ENCODE measurements at regions of chr3 and their contacts with region 1.

Region 1: DNA sequence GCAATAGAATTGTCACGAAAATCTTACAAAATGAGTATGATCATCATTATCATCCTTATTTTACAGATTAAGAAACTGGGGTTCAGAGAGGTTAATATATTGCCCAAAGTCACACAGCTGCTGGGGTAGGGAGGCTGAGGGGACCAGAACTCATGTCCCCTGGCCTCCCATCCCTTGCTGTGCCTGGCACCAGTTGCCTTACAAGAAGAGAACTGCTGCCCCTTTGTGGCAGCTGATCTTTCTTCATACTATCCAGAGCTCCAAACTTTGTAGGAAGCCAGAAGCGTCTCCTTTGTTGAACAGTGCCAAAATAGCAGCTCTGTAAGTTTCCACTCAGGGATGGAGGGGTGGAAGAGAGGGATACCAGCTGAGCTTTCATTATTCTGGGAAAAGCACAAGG is 236.8 kb upstream of the TBC1D5 start:
- DNase-seq: peak; percentile 35
- ATAC-seq: peak; percentile 77
- H3K4me3 ChIP-seq: no peak overlapping the region
- H3K27ac ChIP-seq: no peak overlapping the region
- H3K4me1 ChIP-seq: peaks cover 7% of the 10 kb centered on the region; the same call in 1 of the 2 replicates
- H3K27me3 ChIP-seq: no peaks in the 10 kb centered on the region
- CTCF ChIP-seq: peak; percentile 46; the same call in 1 of the 2 replicates

Region 2: DNA sequence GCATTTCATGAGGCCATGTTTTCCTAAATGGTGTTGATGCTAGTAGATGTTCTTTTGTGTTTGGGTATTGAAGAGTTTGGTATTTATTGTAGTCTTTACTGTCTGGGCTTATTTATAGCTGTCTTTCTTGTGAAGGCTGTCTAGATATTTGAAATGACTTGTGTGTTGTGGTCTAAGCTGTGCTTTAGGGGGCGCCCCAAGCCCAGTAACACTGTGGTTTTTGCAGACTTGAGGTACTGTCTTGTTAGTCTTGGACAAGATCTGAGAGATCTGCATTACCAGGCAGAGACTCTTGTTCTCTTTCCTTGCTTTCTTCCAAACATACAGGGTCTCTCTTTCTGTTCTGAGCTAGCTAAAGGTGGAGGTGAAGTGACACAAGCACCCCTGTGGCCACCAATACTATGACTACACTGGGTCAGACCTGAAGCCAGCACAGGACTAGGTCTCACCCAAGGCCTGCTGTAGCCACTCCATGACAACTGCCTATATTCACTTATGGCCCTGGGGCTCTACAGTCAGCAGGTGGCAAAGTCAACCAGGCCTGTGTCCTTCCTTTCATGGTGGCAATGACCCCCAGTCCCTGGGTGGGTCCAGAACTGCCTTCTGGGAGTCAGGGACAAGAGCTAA is 84.7 kb before region 1 on chr3:
- CTCF ChIA-PET with region 1: interaction called, 6 read pairs
- POLR2A ChIA-PET with region 1: no interaction called
- intact Hi-C with region 1: loop called (anchors 5 kb)
- DNase-seq: peak; percentile 73
- ATAC-seq: peak; percentile 85
- H3K4me3 ChIP-seq: no peak overlapping the region
- H3K27ac ChIP-seq: no peak overlapping the region
- H3K4me1 ChIP-seq: peaks cover 13% of the 10 kb centered on the region
- H3K27me3 ChIP-seq: no peaks in the 10 kb centered on the region
- CTCF ChIP-seq: peak; percentile 78

Region 3: GRCh38 chr3:17915341-17915740 is 63.9 kb before region 1 on chr3:
- CTCF ChIA-PET with region 1: no interaction called
- POLR2A ChIA-PET with region 1: no interaction called
- intact Hi-C with region 1: loop called (anchors 5 kb)
- DNase-seq: peak; percentile 78
- ATAC-seq: peak; percentile 99
- H3K4me3 ChIP-seq: no peak overlapping the region
- H3K27ac ChIP-seq: no peak overlapping the region
- H3K4me1 ChIP-seq: 0 out of 2 replicates have a peak, but pooled peaks cover 4% of the 10 kb centered on the region
- H3K27me3 ChIP-seq: no peaks in the 10 kb centered on the region
- CTCF ChIP-seq: no peak

Measured in PC-3 (cell line).